ENCODE measurements at regions of chr5 and their contacts with region 1.

Region 1: GRCh38 chr5:91383027-91383955 is at the start of gene ARRDC3:
- DNase-seq: peak; percentile 92 to 97 (median 96)
- H3K4me3 ChIP-seq: peak within 1 kb of the TSS; percentile 94
- H3K4me3 Mint-ChIP-seq: peak within 1 kb of the TSS; percentile 94 to 100 (median 96)
- H3K27ac ChIP-seq: peak within 1 kb of the TSS; percentile 100
- H3K27ac Mint-ChIP-seq: peak within 1 kb of the TSS; percentile 95 to 100 (median 98)
- H3K4me1 ChIP-seq: peaks cover 18% of the 10 kb centered on the region
- H3K4me1 Mint-ChIP-seq: peaks cover 27 to 31% (median 29%) of the 10 kb centered on the region in 3 donors
- H3K27me3 ChIP-seq: no peaks in the 10 kb centered on the region
- H3K27me3 Mint-ChIP-seq: peaks cover 0 to 2% of the 10 kb centered on the region in 2 donors
- total RNA-seq, gene ARRDC3: 30.3 to 32.4 TPM

Region 2: DNA sequence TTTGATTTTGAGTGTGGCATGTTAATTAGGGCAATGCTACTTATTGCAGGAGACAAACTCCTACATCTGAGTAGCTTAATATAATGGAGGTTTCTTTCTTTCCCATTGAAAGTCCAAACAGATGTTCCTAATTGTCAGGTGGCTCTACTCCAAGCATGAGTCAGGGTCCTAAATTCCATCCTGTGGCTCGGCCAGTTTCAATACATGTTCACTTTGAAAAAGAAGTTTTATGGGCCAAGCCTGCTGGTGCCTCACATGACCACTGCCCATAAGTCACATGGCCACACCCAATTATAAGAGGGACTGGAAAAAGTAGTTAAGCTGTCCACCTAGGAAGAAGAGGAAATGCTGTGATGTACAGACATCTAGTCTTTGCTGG is 170.6 kb before region 1 on chr5:
- CTCF ChIA-PET with region 1: interaction called, 137 read pairs
- POLR2A ChIA-PET with region 1: no interaction called
- DNase-seq: no peak
- H3K4me3 ChIP-seq: no peak overlapping the region
- H3K4me3 Mint-ChIP-seq: no peak overlapping the region
- H3K27ac ChIP-seq: peak overlapping the region; percentile 35
- H3K27ac Mint-ChIP-seq: no peak overlapping the region
- H3K4me1 ChIP-seq: no peaks in the 10 kb centered on the region
- H3K4me1 Mint-ChIP-seq: no peaks in the 10 kb centered on the region
- H3K27me3 ChIP-seq: no peaks in the 10 kb centered on the region
- H3K27me3 Mint-ChIP-seq: peaks cover 4 to 20% of the 10 kb centered on the region in 2 donors

Region 3: DNA sequence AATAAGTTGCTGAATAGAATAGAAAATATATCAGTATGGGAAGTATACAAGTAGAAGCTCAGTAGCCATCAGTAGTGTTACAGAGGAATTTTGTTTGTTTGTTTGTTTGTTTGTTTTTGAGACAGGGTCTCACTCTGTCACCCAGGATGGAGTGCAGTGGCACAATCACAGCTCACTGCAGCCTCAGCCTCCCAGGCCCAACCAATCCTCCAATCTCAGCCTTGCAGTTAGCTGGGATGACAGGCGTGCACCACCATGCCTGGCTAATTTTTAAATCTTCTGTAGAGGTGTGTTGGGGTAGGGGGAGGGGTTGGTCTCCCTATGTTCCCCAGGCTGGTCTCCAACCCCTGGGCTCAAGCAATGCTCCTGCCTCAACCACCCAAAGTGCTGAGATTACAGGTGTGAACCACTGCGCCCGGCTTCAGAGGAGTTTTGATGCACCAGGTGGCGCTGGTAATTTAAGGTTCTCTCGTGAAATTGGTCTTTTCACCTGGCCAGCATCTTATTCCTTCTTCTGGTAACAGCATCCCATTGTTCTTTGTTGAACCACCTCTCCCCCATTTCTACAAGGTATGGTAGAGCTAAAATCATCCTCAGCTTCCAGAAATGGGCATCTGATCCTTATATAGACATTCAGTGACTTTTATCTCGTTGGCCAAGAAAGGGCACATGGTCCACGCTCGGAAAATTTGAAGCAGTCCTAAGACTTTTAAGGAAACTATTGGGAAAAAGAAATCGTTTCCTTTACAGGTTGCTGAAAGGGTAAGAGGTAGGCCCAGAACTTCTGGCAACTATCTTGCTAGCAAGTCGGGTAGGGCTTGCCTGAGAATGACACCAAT is 157.2 kb before region 1 on chr5:
- CTCF ChIA-PET with region 1: interaction called, 137 read pairs
- POLR2A ChIA-PET with region 1: interaction called, 21 read pairs
- DNase-seq: peak; percentile 40 to 70 (median 46)
- H3K4me3 ChIP-seq: no peak overlapping the region
- H3K4me3 Mint-ChIP-seq: no peak overlapping the region
- H3K27ac ChIP-seq: no peak overlapping the region
- H3K27ac Mint-ChIP-seq: peak overlapping the region in 1 of 8 donors; percentile 20
- H3K4me1 ChIP-seq: no peaks in the 10 kb centered on the region
- H3K4me1 Mint-ChIP-seq: no peaks in the 10 kb centered on the region
- H3K27me3 ChIP-seq: no peaks in the 10 kb centered on the region
- H3K27me3 Mint-ChIP-seq: peaks cover 0 to 23% of the 10 kb centered on the region in 2 donors

Region 4: DNA sequence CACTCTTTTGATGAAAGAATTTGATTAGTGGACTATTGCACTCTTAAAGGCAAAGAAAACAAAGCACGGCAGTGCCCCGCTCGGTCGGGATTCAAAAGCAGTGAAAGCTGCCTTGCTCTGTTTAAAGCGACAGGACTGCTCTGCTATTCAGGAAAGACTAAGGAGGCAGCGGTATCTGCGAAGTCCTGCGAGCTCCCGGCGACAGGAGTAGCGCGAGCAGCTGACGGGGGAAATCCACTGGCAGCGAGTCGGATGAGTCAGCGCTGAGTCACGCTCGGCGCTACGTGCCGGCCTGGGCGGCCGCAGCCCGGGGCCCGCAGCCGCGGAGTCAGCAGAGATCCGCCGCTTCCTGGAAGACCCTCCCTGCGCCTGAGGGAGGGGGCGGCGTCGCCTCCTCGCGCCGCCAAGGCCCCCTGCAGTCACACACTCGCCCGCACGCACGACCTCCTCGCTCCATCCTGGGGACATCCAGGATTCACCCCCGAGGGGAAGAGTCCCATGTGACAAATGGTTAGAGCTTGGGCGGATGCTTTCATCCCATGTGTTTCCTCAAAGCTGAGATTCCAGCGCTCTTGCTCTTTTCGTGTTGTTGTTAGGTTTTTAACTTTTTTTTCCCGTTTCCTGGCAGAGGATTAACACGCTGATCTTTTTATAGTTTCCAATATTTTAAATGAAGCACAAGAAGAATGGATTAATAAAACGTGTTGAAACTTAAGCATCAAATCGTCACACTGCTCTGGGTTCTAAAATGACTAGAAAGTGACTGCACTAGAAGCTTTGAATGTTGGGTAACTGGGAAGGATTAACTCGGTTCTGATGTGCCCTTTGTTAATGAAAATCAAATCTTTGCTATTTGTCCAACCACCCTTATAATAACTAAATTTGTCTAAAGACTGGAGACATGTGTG is 102.7 kb before region 1 on chr5:
- CTCF ChIA-PET with region 1: interaction called, 44 read pairs
- POLR2A ChIA-PET with region 1: interaction called, 30 read pairs
- DNase-seq: peak; percentile 68 to 90 (median 80)
- H3K4me3 ChIP-seq: peak overlapping the region; percentile 62
- H3K4me3 Mint-ChIP-seq: peak overlapping the region; percentile 84 to 91 (median 89)
- H3K27ac ChIP-seq: peak overlapping the region; percentile 70
- H3K27ac Mint-ChIP-seq: peak overlapping the region; percentile 68 to 97 (median 92)
- H3K4me1 ChIP-seq: peaks cover 5% of the 10 kb centered on the region
- H3K4me1 Mint-ChIP-seq: peaks cover 12 to 23% (median 21%) of the 10 kb centered on the region in 3 donors
- H3K27me3 ChIP-seq: no peaks in the 10 kb centered on the region
- H3K27me3 Mint-ChIP-seq: peaks cover 0 to 2% of the 10 kb centered on the region in 2 donors

Region 5: GRCh38 chr5:91367374-91367773 is 15.9 kb before region 1 on chr5:
- CTCF ChIA-PET with region 1: interaction called, 10 read pairs
- POLR2A ChIA-PET with region 1: interaction called, 12 read pairs
- DNase-seq: no peak
- H3K4me3 ChIP-seq: no peak overlapping the region
- H3K4me3 Mint-ChIP-seq: no peak overlapping the region
- H3K27ac ChIP-seq: no peak overlapping the region
- H3K27ac Mint-ChIP-seq: peak overlapping the region in 2 of 8 donors; percentile 25 to 47
- H3K4me1 ChIP-seq: no peaks in the 10 kb centered on the region
- H3K4me1 Mint-ChIP-seq: peaks cover 24 to 36% (median 30%) of the 10 kb centered on the region in 3 donors
- H3K27me3 ChIP-seq: no peaks in the 10 kb centered on the region
- H3K27me3 Mint-ChIP-seq: no peaks in the 10 kb centered on the region

Region 6: GRCh38 chr5:91408710-91409109 is 25.4 kb after region 1 on chr5:
- CTCF ChIA-PET with region 1: no interaction called
- POLR2A ChIA-PET with region 1: no interaction called
- DNase-seq: no peak
- H3K4me3 ChIP-seq: no peak overlapping the region
- H3K4me3 Mint-ChIP-seq: no peak overlapping the region
- H3K27ac ChIP-seq: no peak overlapping the region
- H3K27ac Mint-ChIP-seq: no peak overlapping the region
- H3K4me1 ChIP-seq: no peaks in the 10 kb centered on the region
- H3K4me1 Mint-ChIP-seq: no peaks in the 10 kb centered on the region
- H3K27me3 ChIP-seq: no peaks in the 10 kb centered on the region
- H3K27me3 Mint-ChIP-seq: no peaks in the 10 kb centered on the region

Region 7: DNA sequence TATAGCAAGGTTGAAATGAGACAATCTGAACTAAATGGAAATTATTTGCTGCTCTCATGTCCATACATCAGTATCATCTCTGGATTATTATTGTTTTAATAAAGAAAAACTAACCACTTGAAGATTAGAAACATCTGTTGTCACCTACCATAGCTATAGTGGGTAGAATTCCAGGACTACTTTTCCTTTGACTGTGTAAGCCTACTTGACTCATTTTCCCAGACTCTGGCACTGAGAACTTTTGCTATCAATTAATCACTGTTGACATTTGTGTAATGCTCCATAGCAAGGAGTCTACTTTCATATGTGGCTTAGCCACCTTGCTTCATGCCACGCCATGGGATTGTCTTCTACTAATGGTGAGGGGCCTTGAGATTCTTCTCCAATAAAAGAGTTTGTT is 59.7 kb after region 1 on chr5:
- CTCF ChIA-PET with region 1: no interaction called
- POLR2A ChIA-PET with region 1: no interaction called
- DNase-seq: no peak
- H3K4me3 ChIP-seq: no peak overlapping the region
- H3K4me3 Mint-ChIP-seq: no peak overlapping the region
- H3K27ac ChIP-seq: no peak overlapping the region
- H3K27ac Mint-ChIP-seq: no peak overlapping the region
- H3K4me1 ChIP-seq: no peaks in the 10 kb centered on the region
- H3K4me1 Mint-ChIP-seq: no peaks in the 10 kb centered on the region
- H3K27me3 ChIP-seq: no peaks in the 10 kb centered on the region
- H3K27me3 Mint-ChIP-seq: no peaks in the 10 kb centered on the region